CD8-positive, alpha-beta T cell (primary cell): ENCODE measurements at regions of chr17 and their contacts with region 1.

Region 1: GRCh38 chr17:67376737-67377487 is at the start of gene PITPNC1:
- DNase-seq: peak; percentile 72 to 95 (median 88)
- ATAC-seq: peak; percentile 70
- H3K4me3 ChIP-seq: peak within 1 kb of the TSS; percentile 94 to 97
- H3K4me3 Mint-ChIP-seq: peak within 1 kb of the TSS; percentile 95
- H3K27ac ChIP-seq: peak within 1 kb of the TSS; percentile 81 to 87
- H3K27ac Mint-ChIP-seq: peak within 1 kb of the TSS; percentile 94
- H3K4me1 ChIP-seq: peaks cover 41% of the 10 kb centered on the region
- H3K4me1 Mint-ChIP-seq: peaks cover 46% of the 10 kb centered on the region
- H3K27me3 ChIP-seq: no peaks in the 10 kb centered on the region
- H3K27me3 Mint-ChIP-seq: no peaks in the 10 kb centered on the region
- CTCF ChIP-seq: no peak
- total RNA-seq, gene PITPNC1: 110 to 111 TPM

Region 2: GRCh38 chr17:67183531-67183930 is 193.4 kb before region 1 on chr17:
- CTCF ChIA-PET with region 1: no interaction called
- POLR2A ChIA-PET with region 1: no interaction called
- intact Hi-C with region 1: no loop called
- DNase-seq: no peak
- ATAC-seq: no peak
- H3K4me3 ChIP-seq: no peak overlapping the region
- H3K4me3 Mint-ChIP-seq: no peak overlapping the region
- H3K27ac ChIP-seq: no peak overlapping the region
- H3K27ac Mint-ChIP-seq: no peak overlapping the region
- H3K4me1 ChIP-seq: no peaks in the 10 kb centered on the region
- H3K4me1 Mint-ChIP-seq: no peaks in the 10 kb centered on the region
- H3K27me3 ChIP-seq: no peaks in the 10 kb centered on the region
- H3K27me3 Mint-ChIP-seq: no peaks in the 10 kb centered on the region
- CTCF ChIP-seq: no peak

Region 3: DNA sequence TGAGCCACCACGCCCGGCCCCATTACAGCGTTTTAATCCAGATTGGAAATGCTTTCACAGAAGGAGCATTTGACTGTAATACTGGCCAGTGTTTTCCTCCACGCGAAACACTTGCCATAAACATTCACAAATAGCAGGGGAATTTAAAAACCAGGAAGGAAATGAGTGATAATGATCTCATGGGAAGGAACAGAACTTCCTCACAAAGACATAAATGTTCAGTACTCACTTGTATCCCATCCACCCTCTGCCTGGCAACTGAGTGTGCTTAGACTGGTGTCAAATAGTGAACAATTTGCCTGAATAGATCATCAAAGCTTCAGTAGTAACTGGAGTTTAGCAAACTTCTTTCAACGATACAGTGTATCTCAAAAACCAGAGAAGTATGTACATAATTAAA is 64.6 kb before region 1 on chr17:
- CTCF ChIA-PET with region 1: no interaction called
- POLR2A ChIA-PET with region 1: no interaction called
- intact Hi-C with region 1: no loop called
- DNase-seq: no peak
- ATAC-seq: no peak
- H3K4me3 ChIP-seq: no peak overlapping the region
- H3K4me3 Mint-ChIP-seq: no peak overlapping the region
- H3K27ac ChIP-seq: no peak overlapping the region
- H3K27ac Mint-ChIP-seq: no peak overlapping the region
- H3K4me1 ChIP-seq: no peaks in the 10 kb centered on the region
- H3K4me1 Mint-ChIP-seq: no peaks in the 10 kb centered on the region
- H3K27me3 ChIP-seq: no peaks in the 10 kb centered on the region
- H3K27me3 Mint-ChIP-seq: no peaks in the 10 kb centered on the region
- CTCF ChIP-seq: no peak

Region 4: GRCh38 chr17:67359960-67360773 is 16.7 kb before region 1 on chr17:
- CTCF ChIA-PET with region 1: interaction called, 69 read pairs
- POLR2A ChIA-PET with region 1: interaction called, 4 read pairs
- intact Hi-C with region 1: no loop called
- DNase-seq: peak in 6 of 9 experiments; percentile 26 to 81 (median 62)
- ATAC-seq: peak; percentile 95
- H3K4me3 ChIP-seq: no peak overlapping the region
- H3K4me3 Mint-ChIP-seq: peak overlapping the region; percentile 0
- H3K27ac ChIP-seq: peak overlapping the region; percentile 42 to 46
- H3K27ac Mint-ChIP-seq: peak overlapping the region; percentile 83
- H3K4me1 ChIP-seq: peaks cover 61% of the 10 kb centered on the region
- H3K4me1 Mint-ChIP-seq: peaks cover 65% of the 10 kb centered on the region
- H3K27me3 ChIP-seq: no peaks in the 10 kb centered on the region
- H3K27me3 Mint-ChIP-seq: no peaks in the 10 kb centered on the region
- CTCF ChIP-seq: peak; percentile 63

Region 5: GRCh38 chr17:67421869-67422273 is 45.0 kb after region 1 on chr17:
- CTCF ChIA-PET with region 1: interaction called, 15 read pairs
- POLR2A ChIA-PET with region 1: interaction called, 10 read pairs
- intact Hi-C with region 1: loop called (anchors 1 to 2 kb)
- DNase-seq: peak in 7 of 9 experiments; percentile 53 to 95 (median 69)
- ATAC-seq: peak; percentile 87
- H3K4me3 ChIP-seq: no peak overlapping the region
- H3K4me3 Mint-ChIP-seq: peak overlapping the region; percentile 35
- H3K27ac ChIP-seq: peak overlapping the region; percentile 50 to 96
- H3K27ac Mint-ChIP-seq: peak overlapping the region; percentile 96
- H3K4me1 ChIP-seq: peaks cover 70% of the 10 kb centered on the region
- H3K4me1 Mint-ChIP-seq: peaks cover 90% of the 10 kb centered on the region
- H3K27me3 ChIP-seq: no peaks in the 10 kb centered on the region
- H3K27me3 Mint-ChIP-seq: no peaks in the 10 kb centered on the region
- CTCF ChIP-seq: no peak

Region 6: DNA sequence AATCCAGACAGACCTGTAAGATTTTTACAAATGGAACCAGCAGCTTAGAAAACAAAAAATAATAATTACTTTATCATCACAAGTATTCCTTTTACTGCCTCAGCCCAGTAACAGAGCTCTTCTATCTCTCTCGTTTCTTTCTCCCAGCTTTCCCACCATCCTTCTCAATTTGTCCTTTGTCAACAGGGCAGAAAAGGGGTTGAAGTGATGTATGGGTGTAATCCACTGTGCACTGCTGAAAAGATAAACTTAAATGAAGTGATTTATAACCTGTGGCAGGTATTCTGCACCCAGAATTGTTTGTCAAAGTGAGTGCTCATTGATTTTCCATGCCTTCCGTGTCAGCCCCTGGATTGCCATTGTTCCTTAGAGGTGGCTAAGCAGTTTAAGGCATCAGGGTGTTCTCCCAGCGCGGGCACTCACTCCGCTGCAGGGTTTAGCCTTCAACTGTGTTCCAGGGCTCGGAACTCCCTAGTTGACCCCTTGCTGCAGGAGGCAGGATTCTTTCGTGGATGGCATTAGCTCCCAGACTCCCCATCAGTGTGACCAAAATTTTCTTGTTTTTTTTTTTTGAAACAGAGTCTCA is 83.1 kb after region 1 on chr17:
- CTCF ChIA-PET with region 1: interaction called, 16 read pairs
- POLR2A ChIA-PET with region 1: interaction called, 6 read pairs
- intact Hi-C with region 1: no loop called
- DNase-seq: peak in 1 of 9 experiments; percentile 39
- ATAC-seq: no peak
- H3K4me3 ChIP-seq: no peak overlapping the region
- H3K4me3 Mint-ChIP-seq: no peak overlapping the region
- H3K27ac ChIP-seq: peak overlapping the region in 1 of 2 experiments; percentile 20
- H3K27ac Mint-ChIP-seq: peak overlapping the region; percentile 80
- H3K4me1 ChIP-seq: peaks cover 60% of the 10 kb centered on the region
- H3K4me1 Mint-ChIP-seq: peaks cover 79% of the 10 kb centered on the region
- H3K27me3 ChIP-seq: no peaks in the 10 kb centered on the region
- H3K27me3 Mint-ChIP-seq: no peaks in the 10 kb centered on the region
- CTCF ChIP-seq: no peak

Region 7: GRCh38 chr17:67528751-67529436 is 152.0 kb after region 1 on chr17:
- CTCF ChIA-PET with region 1: interaction called, 7 read pairs
- POLR2A ChIA-PET with region 1: no interaction called
- intact Hi-C with region 1: loop called in 1 of 2 experiments (anchors 10 kb)
- DNase-seq: no peak
- ATAC-seq: no peak
- H3K4me3 ChIP-seq: no peak overlapping the region
- H3K4me3 Mint-ChIP-seq: no peak overlapping the region
- H3K27ac ChIP-seq: no peak overlapping the region
- H3K27ac Mint-ChIP-seq: no peak overlapping the region
- H3K4me1 ChIP-seq: peaks cover 4% of the 10 kb centered on the region
- H3K4me1 Mint-ChIP-seq: peaks cover 52% of the 10 kb centered on the region
- H3K27me3 ChIP-seq: no peaks in the 10 kb centered on the region
- H3K27me3 Mint-ChIP-seq: no peaks in the 10 kb centered on the region
- CTCF ChIP-seq: no peak

Region 8: GRCh38 chr17:67602956-67603355 is 226.0 kb after region 1 on chr17:
- CTCF ChIA-PET with region 1: interaction called, 96 read pairs
- POLR2A ChIA-PET with region 1: interaction called, 8 read pairs
- intact Hi-C with region 1: loop called (anchors 1 kb)
- DNase-seq: peak; percentile 8 to 73 (median 51)
- ATAC-seq: peak; percentile 97
- H3K4me3 ChIP-seq: no peak overlapping the region
- H3K4me3 Mint-ChIP-seq: no peak overlapping the region
- H3K27ac ChIP-seq: no peak overlapping the region
- H3K27ac Mint-ChIP-seq: peak overlapping the region; percentile 29
- H3K4me1 ChIP-seq: no peaks in the 10 kb centered on the region
- H3K4me1 Mint-ChIP-seq: peaks cover 34% of the 10 kb centered on the region
- H3K27me3 ChIP-seq: no peaks in the 10 kb centered on the region
- H3K27me3 Mint-ChIP-seq: no peaks in the 10 kb centered on the region
- CTCF ChIP-seq: peak; percentile 52

Region 9: DNA sequence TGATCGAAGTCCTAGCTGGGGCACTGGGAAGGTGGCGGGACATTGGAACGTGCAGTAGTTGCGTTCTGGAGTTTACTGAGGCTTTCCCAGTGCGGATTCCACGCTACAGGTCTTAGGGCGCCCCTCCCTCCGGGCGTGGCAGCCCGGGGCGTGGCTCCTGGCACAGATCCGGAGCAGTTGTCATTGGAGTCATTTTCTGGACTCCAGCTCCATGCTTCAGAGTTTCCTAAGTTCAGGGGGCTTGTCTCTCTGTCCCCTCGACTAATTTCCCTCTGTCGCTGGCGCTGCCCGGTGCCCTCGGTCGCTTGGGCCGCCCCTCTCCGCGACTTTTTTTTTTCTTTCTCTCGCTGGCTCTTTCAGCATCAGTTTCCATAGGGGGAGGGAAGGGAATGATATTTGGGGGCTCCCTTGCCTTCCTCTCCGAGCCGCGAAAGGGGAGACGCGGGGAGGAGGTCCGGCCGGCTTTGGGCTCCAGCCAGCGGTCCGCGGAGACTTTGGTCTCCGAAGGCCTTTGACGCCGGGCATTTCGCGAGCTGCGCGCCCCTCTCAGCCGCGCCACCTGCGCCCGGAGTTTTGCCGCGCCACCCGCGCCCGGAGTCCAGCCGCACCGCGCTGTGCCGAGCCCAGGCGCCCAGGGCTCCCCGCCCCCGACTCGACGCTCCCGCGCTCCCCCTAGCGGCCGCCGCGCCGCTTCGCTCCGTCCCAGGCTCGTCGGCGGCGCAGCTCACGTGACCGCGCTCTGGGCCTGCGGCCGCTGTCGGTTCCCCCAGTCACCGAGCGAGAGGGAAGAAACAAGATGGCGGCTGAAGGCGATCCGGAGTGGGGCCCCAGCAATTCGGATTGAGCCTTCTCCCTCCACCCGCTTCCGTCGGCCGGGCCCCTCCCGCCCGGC is 448.1 kb after region 1 on chr17 and contains the start of gene BPTF:
- CTCF ChIA-PET with region 1: interaction called, 3 read pairs
- POLR2A ChIA-PET with region 1: no interaction called
- intact Hi-C with region 1: loop called in 1 of 2 experiments (anchors 5 kb)
- DNase-seq: peak; percentile 82 to 97 (median 92)
- ATAC-seq: peak; percentile 69
- H3K4me3 ChIP-seq: peak within 1 kb of the TSS; percentile 75 to 85
- H3K4me3 Mint-ChIP-seq: peak within 1 kb of the TSS; percentile 99
- H3K27ac ChIP-seq: peak within 1 kb of the TSS; percentile 68 to 80
- H3K27ac Mint-ChIP-seq: peak within 1 kb of the TSS; percentile 100
- H3K4me1 ChIP-seq: peaks cover 33% of the 10 kb centered on the region
- H3K4me1 Mint-ChIP-seq: peaks cover 31% of the 10 kb centered on the region
- H3K27me3 ChIP-seq: no peaks in the 10 kb centered on the region
- H3K27me3 Mint-ChIP-seq: peaks cover 4% of the 10 kb centered on the region
- CTCF ChIP-seq: peak; percentile 94
- total RNA-seq, gene BPTF: 97.8 to 107 TPM